ENCODE measurements at regions of chr15 and their contacts with region 1.

Region 1: GRCh38 chr15:25438601-25439368 is at the start of gene UBE3A:
- DNase-seq: peak; percentile 63
- ATAC-seq: peak; percentile 92
- H3K4me3 ChIP-seq: peak within 1 kb of the TSS; percentile 92
- H3K27ac ChIP-seq: peak within 1 kb of the TSS; percentile 96
- H3K4me1 ChIP-seq: no peaks in the 10 kb centered on the region
- H3K27me3 ChIP-seq: no peaks in the 10 kb centered on the region
- CTCF ChIP-seq: peak in 2 of 3 experiments; percentile 12 to 47; a peak in 3 of 6 replicates
- EP300 ChIP-seq: no peak
- POLR2A ChIP-seq: peak; percentile 93
- RAD21 ChIP-seq: peak; percentile 41; the same call in 1 of the 2 replicates
- polyA plus RNA-seq, gene UBE3A: 32.9 to 51.5 TPM

Region 2: DNA sequence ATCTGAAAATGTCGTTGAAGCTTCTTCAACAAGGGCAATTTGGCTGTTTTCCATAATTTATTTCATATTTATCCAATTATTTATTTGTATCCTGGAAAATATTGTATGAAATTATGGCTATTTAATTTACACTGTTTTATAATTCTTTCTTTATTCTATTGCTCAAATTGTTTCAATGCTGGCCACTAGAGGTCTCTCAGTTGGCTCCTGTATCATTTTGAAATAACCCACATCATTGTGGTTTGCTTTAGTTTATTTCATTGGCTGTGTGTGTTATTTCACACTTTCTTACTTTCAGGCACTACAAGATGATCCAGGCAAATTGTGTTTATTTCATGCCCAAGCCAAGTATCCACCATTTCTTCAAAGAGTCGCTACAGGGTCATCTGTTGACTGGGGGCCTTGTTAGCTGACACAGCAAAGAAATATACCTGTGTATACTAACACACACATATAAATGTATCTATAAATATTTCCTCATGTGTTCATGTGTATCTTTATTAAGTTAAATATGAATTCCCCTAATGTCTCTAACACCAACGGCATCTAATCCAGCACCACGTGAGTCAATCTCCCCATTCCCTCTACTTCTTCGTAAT is 677.0 kb before region 1 on chr15:
- CTCF ChIA-PET with region 1: no interaction called
- POLR2A ChIA-PET with region 1: no interaction called
- RAD21 ChIA-PET with region 1: no interaction called
- SMC1A ChIA-PET with region 1: no interaction called
- in situ Hi-C with region 1: no loop called
- intact Hi-C with region 1: loop called (anchors 5 kb)
- DNase-seq: no peak
- ATAC-seq: no peak
- H3K4me3 ChIP-seq: no peak overlapping the region
- H3K27ac ChIP-seq: no peak overlapping the region
- H3K4me1 ChIP-seq: no peaks in the 10 kb centered on the region
- H3K27me3 ChIP-seq: no peaks in the 10 kb centered on the region
- CTCF ChIP-seq: peak in 2 of 3 experiments; percentile 11 to 18; a peak in 2 of 6 replicates
- EP300 ChIP-seq: no peak
- POLR2A ChIP-seq: no peak
- RAD21 ChIP-seq: no peak

Region 3: GRCh38 chr15:24956111-24956838 is 482.5 kb before region 1 on chr15:
- CTCF ChIA-PET with region 1: no interaction called
- POLR2A ChIA-PET with region 1: no interaction called
- RAD21 ChIA-PET with region 1: no interaction called
- SMC1A ChIA-PET with region 1: no interaction called
- in situ Hi-C with region 1: no loop called
- intact Hi-C with region 1: loop called (anchors 2 kb)
- DNase-seq: peak; percentile 57
- ATAC-seq: peak; percentile 84
- H3K4me3 ChIP-seq: peak overlapping the region; percentile 76
- H3K27ac ChIP-seq: peak overlapping the region; percentile 72
- H3K4me1 ChIP-seq: no peaks in the 10 kb centered on the region
- H3K27me3 ChIP-seq: no peaks in the 10 kb centered on the region
- CTCF ChIP-seq: no peak
- EP300 ChIP-seq: no peak
- POLR2A ChIP-seq: peak; percentile 78
- RAD21 ChIP-seq: no peak

Region 4: GRCh38 chr15:24985224-24985623 is 453.6 kb before region 1 on chr15:
- CTCF ChIA-PET with region 1: no interaction called
- POLR2A ChIA-PET with region 1: no interaction called
- RAD21 ChIA-PET with region 1: no interaction called
- SMC1A ChIA-PET with region 1: no interaction called
- in situ Hi-C with region 1: no loop called
- intact Hi-C with region 1: no loop called
- DNase-seq: no peak
- ATAC-seq: no peak
- H3K4me3 ChIP-seq: no peak overlapping the region
- H3K27ac ChIP-seq: no peak overlapping the region
- H3K4me1 ChIP-seq: no peaks in the 10 kb centered on the region
- H3K27me3 ChIP-seq: no peaks in the 10 kb centered on the region
- CTCF ChIP-seq: no peak
- EP300 ChIP-seq: no peak
- POLR2A ChIP-seq: no peak
- RAD21 ChIP-seq: no peak

Region 5: DNA sequence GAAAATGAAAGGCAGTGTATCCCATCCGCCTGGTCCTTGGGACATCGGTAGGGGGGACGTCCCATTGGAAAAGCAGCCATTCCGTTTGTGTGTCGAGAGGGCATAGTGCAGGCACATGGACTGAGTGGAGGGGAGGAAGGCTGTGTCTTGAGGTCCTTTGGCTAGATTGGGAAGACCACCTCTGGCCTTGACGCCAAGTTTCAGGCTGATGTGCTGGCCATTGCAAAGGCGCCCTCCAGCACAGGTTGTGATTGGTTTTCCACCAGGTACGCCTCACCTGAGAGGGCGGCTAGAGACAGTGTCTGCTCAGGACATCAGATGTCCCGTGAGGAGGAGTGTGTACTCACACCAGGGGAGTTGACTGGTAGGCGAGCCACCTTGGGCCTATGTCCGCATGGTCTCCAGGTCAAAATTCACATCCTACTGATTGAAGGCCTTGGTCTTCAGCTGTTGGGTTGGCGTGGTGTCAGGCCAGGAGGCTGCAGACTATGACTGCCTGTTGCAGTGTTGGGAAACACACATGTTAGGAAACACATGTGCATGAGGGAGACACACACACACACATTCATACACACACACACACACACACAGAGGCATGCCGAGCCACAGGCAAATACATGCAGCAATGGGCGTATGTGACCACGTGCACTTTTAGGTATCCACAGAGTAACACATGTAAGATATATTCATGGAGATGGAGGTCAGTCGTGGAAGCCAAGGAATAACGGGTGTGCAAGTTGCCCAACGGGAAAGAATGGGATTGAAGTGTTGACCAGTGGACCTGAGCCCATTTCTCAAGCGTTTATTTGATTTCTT is 385.6 kb before region 1 on chr15:
- CTCF ChIA-PET with region 1: no interaction called
- POLR2A ChIA-PET with region 1: no interaction called
- RAD21 ChIA-PET with region 1: no interaction called
- SMC1A ChIA-PET with region 1: no interaction called
- in situ Hi-C with region 1: no loop called
- intact Hi-C with region 1: no loop called
- DNase-seq: no peak
- ATAC-seq: no peak
- H3K4me3 ChIP-seq: no peak overlapping the region
- H3K27ac ChIP-seq: no peak overlapping the region
- H3K4me1 ChIP-seq: no peaks in the 10 kb centered on the region
- H3K27me3 ChIP-seq: no peaks in the 10 kb centered on the region
- CTCF ChIP-seq: no peak
- EP300 ChIP-seq: no peak
- POLR2A ChIP-seq: no peak
- RAD21 ChIP-seq: no peak

Region 6: GRCh38 chr15:25345943-25346342 is 92.8 kb before region 1 on chr15:
- CTCF ChIA-PET with region 1: no interaction called
- POLR2A ChIA-PET with region 1: no interaction called
- RAD21 ChIA-PET with region 1: no interaction called
- SMC1A ChIA-PET with region 1: interaction called, 4 read pairs
- in situ Hi-C with region 1: no loop called
- intact Hi-C with region 1: loop called (anchors 5 kb)
- DNase-seq: no peak
- ATAC-seq: no peak
- H3K4me3 ChIP-seq: no peak overlapping the region
- H3K27ac ChIP-seq: no peak overlapping the region
- H3K4me1 ChIP-seq: no peaks in the 10 kb centered on the region
- H3K27me3 ChIP-seq: no peaks in the 10 kb centered on the region
- CTCF ChIP-seq: no peak; a peak in 1 of 6 replicates
- EP300 ChIP-seq: no peak
- POLR2A ChIP-seq: no peak
- RAD21 ChIP-seq: no peak

Region 7: DNA sequence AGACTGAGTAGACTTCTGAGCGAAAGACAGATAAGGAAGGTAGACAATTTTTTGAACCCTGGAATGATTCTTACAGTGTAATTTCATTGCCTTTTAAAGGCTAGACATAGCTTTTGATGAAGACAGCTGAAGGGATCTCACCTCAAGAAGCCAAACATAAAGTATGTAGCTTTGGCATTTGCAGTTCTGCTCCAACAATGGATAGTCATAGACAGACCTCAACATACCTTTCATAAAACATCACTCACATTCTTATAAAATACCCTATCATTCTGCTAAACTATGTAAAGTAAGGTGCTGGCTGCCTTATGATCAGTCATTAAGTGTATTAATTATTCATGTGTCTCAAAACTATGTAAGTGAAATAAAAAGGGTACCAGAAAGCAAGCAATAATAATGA is 69.9 kb before region 1 on chr15:
- CTCF ChIA-PET with region 1: interaction called, 4 read pairs
- POLR2A ChIA-PET with region 1: no interaction called
- RAD21 ChIA-PET with region 1: interaction called, 4 read pairs
- SMC1A ChIA-PET with region 1: interaction called, 6 read pairs
- in situ Hi-C with region 1: no loop called
- intact Hi-C with region 1: loop called (anchors 5 kb)
- DNase-seq: no peak
- ATAC-seq: no peak
- H3K4me3 ChIP-seq: no peak overlapping the region
- H3K27ac ChIP-seq: no peak overlapping the region
- H3K4me1 ChIP-seq: no peaks in the 10 kb centered on the region
- H3K27me3 ChIP-seq: no peaks in the 10 kb centered on the region
- CTCF ChIP-seq: no peak
- EP300 ChIP-seq: no peak
- POLR2A ChIP-seq: no peak
- RAD21 ChIP-seq: no peak

Region 8: GRCh38 chr15:25401501-25401900 is 37.3 kb before region 1 on chr15:
- CTCF ChIA-PET with region 1: no interaction called
- POLR2A ChIA-PET with region 1: no interaction called
- RAD21 ChIA-PET with region 1: interaction called, 4 read pairs
- SMC1A ChIA-PET with region 1: interaction called, 5 read pairs
- in situ Hi-C with region 1: no loop called
- intact Hi-C with region 1: loop called (anchors 5 kb)
- DNase-seq: no peak
- ATAC-seq: no peak
- H3K4me3 ChIP-seq: no peak overlapping the region
- H3K27ac ChIP-seq: no peak overlapping the region
- H3K4me1 ChIP-seq: no peaks in the 10 kb centered on the region
- H3K27me3 ChIP-seq: no peaks in the 10 kb centered on the region
- CTCF ChIP-seq: no peak
- EP300 ChIP-seq: no peak
- POLR2A ChIP-seq: no peak
- RAD21 ChIP-seq: no peak

Region 9: GRCh38 chr15:25416693-25417092 is 22.1 kb before region 1 on chr15:
- CTCF ChIA-PET with region 1: interaction called, 7 read pairs
- POLR2A ChIA-PET with region 1: interaction called, 6 read pairs
- RAD21 ChIA-PET with region 1: interaction called, 52 read pairs
- SMC1A ChIA-PET with region 1: interaction called, 39 read pairs
- in situ Hi-C with region 1: no loop called
- intact Hi-C with region 1: no loop called
- DNase-seq: peak; percentile 71
- ATAC-seq: peak; percentile 88
- H3K4me3 ChIP-seq: peak overlapping the region; percentile 20; the same call in 1 of the 2 replicates
- H3K27ac ChIP-seq: peak overlapping the region; percentile 80
- H3K4me1 ChIP-seq: peaks cover 7% of the 10 kb centered on the region; the same call in 1 of the 2 replicates
- H3K27me3 ChIP-seq: no peaks in the 10 kb centered on the region
- CTCF ChIP-seq: no peak
- EP300 ChIP-seq: peak; percentile 47 to 51; a peak in 1 of 4 replicates
- POLR2A ChIP-seq: no peak
- RAD21 ChIP-seq: no peak

Region 10: DNA sequence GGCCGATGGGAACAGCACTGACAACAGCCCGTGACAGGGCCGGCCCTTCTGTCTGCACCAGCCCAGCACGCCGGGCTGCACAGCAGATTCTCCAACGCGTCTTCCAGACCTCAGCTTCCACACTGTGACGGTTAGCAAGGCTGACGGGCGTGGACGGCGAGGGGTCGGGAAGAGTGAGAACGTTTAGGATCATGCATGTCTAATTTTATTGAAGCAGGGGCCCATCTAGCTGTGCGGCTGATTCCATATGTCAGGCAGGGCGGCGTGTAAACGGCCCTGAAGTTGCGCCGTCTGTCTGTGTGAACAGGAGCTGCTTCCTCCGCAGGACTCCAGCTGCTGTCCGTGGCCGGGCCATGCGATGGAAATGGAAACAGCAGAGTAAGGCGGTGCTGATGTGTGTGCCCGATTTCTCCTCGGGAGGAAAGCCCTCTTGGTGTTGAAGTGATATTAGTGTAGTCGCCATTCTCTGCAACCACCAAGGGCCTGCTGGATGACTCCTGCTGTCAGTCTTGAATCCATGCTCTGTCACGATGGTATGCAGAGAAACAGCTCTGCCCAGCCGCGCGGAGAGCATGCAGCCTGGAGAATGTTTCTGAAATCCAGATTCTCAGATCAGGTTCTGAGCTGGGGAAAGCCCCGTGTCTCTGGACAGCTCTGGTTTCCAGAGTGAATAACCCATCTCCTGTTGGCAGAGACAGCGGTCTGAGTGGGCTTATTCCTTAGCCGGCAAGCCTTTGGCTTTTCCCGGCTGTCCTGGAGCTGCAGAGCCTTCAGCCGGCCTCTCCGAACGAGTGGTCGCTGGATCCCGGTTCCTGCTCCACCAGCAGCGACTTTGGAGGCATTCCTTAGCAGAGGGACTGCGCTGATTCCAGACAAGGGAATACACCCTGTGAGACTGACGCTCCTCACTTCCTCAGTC is 158.1 kb after region 1 on chr15:
- CTCF ChIA-PET with region 1: no interaction called
- POLR2A ChIA-PET with region 1: no interaction called
- RAD21 ChIA-PET with region 1: no interaction called
- SMC1A ChIA-PET with region 1: no interaction called
- in situ Hi-C with region 1: no loop called
- intact Hi-C with region 1: no loop called
- DNase-seq: no peak
- ATAC-seq: no peak
- H3K4me3 ChIP-seq: no peak overlapping the region
- H3K27ac ChIP-seq: no peak overlapping the region
- H3K4me1 ChIP-seq: no peaks in the 10 kb centered on the region
- H3K27me3 ChIP-seq: no peaks in the 10 kb centered on the region
- CTCF ChIP-seq: no peak
- EP300 ChIP-seq: no peak
- POLR2A ChIP-seq: no peak
- RAD21 ChIP-seq: no peak

Region 11: DNA sequence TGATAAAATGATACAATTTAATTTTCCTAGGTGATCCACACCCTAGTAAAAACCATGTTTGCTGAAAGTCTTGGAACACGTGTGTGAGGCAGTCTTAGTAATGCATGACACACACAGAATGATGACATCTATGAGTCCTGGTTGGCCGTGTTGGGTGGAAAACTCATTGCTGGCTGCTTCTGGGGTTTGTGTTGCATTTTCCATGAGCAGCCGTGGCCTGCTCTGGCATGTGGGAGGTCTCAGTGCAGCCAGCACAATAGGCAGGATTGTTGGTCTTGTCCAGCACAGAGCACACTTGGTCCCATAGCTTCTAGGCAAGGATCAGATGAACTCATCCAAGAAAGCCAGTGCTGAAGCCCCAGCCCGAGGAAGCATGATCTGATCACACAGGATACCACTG is 172.8 kb after region 1 on chr15:
- CTCF ChIA-PET with region 1: no interaction called
- POLR2A ChIA-PET with region 1: no interaction called
- RAD21 ChIA-PET with region 1: no interaction called
- SMC1A ChIA-PET with region 1: no interaction called
- in situ Hi-C with region 1: no loop called
- intact Hi-C with region 1: no loop called
- DNase-seq: no peak
- ATAC-seq: no peak
- H3K4me3 ChIP-seq: no peak overlapping the region
- H3K27ac ChIP-seq: no peak overlapping the region
- H3K4me1 ChIP-seq: no peaks in the 10 kb centered on the region
- H3K27me3 ChIP-seq: no peaks in the 10 kb centered on the region
- CTCF ChIP-seq: no peak
- EP300 ChIP-seq: no peak
- POLR2A ChIP-seq: no peak
- RAD21 ChIP-seq: no peak